MCF 10A (cell line): ENCODE measurements at regions of chr2 and their contacts with region 1.

Region 1: DNA sequence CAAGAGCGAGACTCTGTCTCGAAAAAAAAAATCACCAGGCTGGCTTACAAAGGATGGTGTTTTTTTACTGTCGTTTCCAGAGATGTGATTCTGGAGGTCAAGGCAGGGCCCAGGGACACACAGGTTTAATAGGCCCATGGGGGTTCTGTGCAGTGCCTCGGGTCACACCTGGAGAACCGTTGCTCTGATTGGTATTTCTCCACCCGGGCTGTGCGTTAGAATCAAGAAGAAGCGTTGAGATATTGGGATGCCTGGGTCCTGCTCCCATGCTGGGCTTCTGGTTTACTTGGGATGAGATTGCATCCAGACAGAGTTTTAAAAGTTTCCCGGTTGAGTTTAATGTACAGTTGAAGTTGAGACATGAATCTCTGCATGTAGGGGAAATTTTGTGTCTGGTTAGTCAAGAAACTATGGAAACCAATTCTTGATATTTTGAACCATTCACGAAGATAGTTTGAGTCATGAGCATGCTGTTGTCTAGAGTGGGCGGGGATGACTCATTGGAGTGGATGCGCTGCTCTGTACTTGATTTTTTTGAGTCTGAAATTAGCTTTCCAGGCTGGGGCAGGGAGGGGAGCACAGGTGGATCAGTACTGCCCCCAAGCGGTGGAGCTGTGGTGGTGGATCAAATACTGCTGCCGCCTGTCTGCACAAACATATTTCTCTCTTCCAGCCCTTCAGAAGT is 50.1 kb downstream of the GREB1 start:
- DNase-seq: peak; percentile 93
- H3K4me3 Mint-ChIP-seq: no peak overlapping the region
- H3K27ac Mint-ChIP-seq: no peak overlapping the region
- H3K4me1 Mint-ChIP-seq: peaks cover 7% of the 10 kb centered on the region
- H3K27me3 Mint-ChIP-seq: peaks cover 9% of the 10 kb centered on the region
- CTCF ChIP-seq: peak; percentile 91

Region 2: GRCh38 chr2:11234309-11234708 is 349.7 kb before region 1 on chr2:
- CTCF ChIA-PET with region 1: interaction called, 8 read pairs
- POLR2A ChIA-PET with region 1: no interaction called
- intact Hi-C with region 1: loop called (anchors 1 kb)
- DNase-seq: peak; percentile 36
- H3K4me3 Mint-ChIP-seq: no peak overlapping the region
- H3K27ac Mint-ChIP-seq: no peak overlapping the region
- H3K4me1 Mint-ChIP-seq: no peaks in the 10 kb centered on the region
- H3K27me3 Mint-ChIP-seq: no peaks in the 10 kb centered on the region
- CTCF ChIP-seq: peak; percentile 64

Region 3: GRCh38 chr2:11492720-11493119 is 91.3 kb before region 1 on chr2:
- CTCF ChIA-PET with region 1: interaction called, 74 read pairs
- POLR2A ChIA-PET with region 1: no interaction called
- intact Hi-C with region 1: no loop called
- DNase-seq: no peak
- H3K4me3 Mint-ChIP-seq: no peak overlapping the region
- H3K27ac Mint-ChIP-seq: no peak overlapping the region
- H3K4me1 Mint-ChIP-seq: no peaks in the 10 kb centered on the region
- H3K27me3 Mint-ChIP-seq: no peaks in the 10 kb centered on the region
- CTCF ChIP-seq: no peak

Region 4: DNA sequence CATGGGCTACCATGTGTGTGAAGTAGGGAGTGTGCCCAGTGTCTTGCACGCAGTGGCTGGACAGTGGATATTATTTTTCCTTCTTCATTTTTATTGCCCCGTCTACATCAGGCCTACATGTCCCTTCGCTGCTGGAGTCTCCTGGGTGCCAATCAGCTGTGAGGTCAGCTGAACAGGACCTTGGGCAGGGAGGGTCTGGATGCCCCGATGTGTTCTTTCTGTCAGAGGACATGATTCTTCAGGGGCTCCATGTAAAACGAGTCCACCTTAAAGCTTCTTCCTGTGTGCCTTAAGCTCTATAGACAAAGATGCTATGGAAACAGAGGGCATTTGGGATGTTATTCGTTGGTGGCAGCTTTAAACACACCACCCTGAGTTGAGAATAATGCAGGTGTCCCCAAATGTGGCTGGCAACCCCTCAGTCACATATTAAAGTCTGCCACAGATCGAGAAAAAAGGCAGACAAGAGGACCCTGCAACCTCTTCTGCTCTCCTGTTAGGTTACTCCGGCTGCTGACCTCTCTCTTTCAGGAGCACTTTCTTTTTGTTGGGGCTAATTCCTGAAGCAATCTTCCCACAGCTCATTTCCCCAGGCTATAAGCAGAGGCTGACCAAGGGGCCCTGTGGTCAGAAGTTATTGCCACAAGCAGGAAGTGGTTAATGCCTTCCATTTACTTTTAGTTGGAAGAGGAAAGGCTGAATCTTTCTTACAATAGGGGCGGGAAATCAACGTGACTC is 30.2 kb before region 1 on chr2:
- CTCF ChIA-PET with region 1: interaction called, 16 read pairs
- POLR2A ChIA-PET with region 1: no interaction called
- intact Hi-C with region 1: no loop called
- DNase-seq: peak; percentile 41
- H3K4me3 Mint-ChIP-seq: no peak overlapping the region
- H3K27ac Mint-ChIP-seq: no peak overlapping the region
- H3K4me1 Mint-ChIP-seq: peaks cover 7% of the 10 kb centered on the region
- H3K27me3 Mint-ChIP-seq: peaks cover 17% of the 10 kb centered on the region
- CTCF ChIP-seq: no peak

Region 5: DNA sequence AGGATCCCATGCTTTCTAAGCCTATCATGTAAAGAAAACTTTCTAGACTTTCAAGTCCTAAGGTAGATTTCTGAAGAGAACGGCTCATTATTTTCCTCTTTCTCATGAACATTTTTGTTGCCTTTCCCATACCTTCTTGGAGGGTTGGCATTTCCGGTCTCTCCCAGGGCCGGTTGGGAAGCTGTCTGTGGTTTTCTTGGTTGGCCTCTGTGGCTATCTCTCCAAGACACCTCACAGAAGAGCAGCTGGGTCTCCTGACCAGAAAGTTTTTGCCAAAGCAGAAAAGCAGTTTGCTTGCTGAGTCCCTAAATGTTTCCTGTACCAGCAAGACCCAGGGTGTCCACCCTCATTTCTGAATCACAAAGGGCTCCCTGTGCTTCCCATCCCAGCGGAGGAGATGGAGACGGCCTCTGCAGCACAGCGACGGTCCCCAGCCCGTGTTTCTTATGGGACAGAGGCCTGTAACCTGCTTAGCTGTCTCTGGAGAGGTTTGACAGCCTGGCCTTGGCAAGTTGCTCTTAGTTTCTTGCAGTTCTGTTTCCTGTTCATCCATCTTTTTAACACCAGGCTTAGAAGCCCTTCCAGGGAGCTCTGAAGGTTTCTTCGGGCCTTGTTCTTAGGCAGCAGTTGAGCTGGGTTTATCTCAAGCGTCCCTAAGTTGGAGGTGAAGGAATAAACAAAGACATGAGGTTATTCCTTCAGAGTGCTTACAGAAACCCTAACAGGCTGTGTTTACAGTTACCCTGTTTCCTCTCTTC is 10.4 kb before region 1 on chr2:
- CTCF ChIA-PET with region 1: interaction called, 31 read pairs
- POLR2A ChIA-PET with region 1: no interaction called
- intact Hi-C with region 1: no loop called
- DNase-seq: peak; percentile 33
- H3K4me3 Mint-ChIP-seq: no peak overlapping the region
- H3K27ac Mint-ChIP-seq: no peak overlapping the region
- H3K4me1 Mint-ChIP-seq: peaks cover 7% of the 10 kb centered on the region
- H3K27me3 Mint-ChIP-seq: no peaks in the 10 kb centered on the region
- CTCF ChIP-seq: no peak